MCF 10A (cell line): ENCODE measurements at regions of chr17 and their contacts with region 1.

Region 1: GRCh38 chr17:60641810-60642220 is 35.8 kb upstream of the BCAS3 start:
- DNase-seq: peak; percentile 86
- H3K4me3 Mint-ChIP-seq: no peak overlapping the region
- H3K27ac Mint-ChIP-seq: no peak overlapping the region
- H3K4me1 Mint-ChIP-seq: peaks cover 7% of the 10 kb centered on the region
- H3K27me3 Mint-ChIP-seq: no peaks in the 10 kb centered on the region
- CTCF ChIP-seq: peak; percentile 30

Region 2: GRCh38 chr17:60435244-60436167 is 206.3 kb before region 1 on chr17:
- CTCF ChIA-PET with region 1: interaction called, 4 read pairs
- POLR2A ChIA-PET with region 1: no interaction called
- intact Hi-C with region 1: loop called (anchors 1 kb)
- DNase-seq: peak; percentile 93
- H3K4me3 Mint-ChIP-seq: no peak overlapping the region
- H3K27ac Mint-ChIP-seq: no peak overlapping the region
- H3K4me1 Mint-ChIP-seq: peaks cover 8% of the 10 kb centered on the region
- H3K27me3 Mint-ChIP-seq: no peaks in the 10 kb centered on the region
- CTCF ChIP-seq: peak; percentile 87

Region 3: GRCh38 chr17:60468371-60468770 is 173.4 kb before region 1 on chr17:
- CTCF ChIA-PET with region 1: interaction called, 17 read pairs
- POLR2A ChIA-PET with region 1: no interaction called
- intact Hi-C with region 1: loop called (anchors 5 kb)
- DNase-seq: no peak
- H3K4me3 Mint-ChIP-seq: no peak overlapping the region
- H3K27ac Mint-ChIP-seq: no peak overlapping the region
- H3K4me1 Mint-ChIP-seq: peaks cover 11% of the 10 kb centered on the region
- H3K27me3 Mint-ChIP-seq: no peaks in the 10 kb centered on the region
- CTCF ChIP-seq: no peak

Region 4: DNA sequence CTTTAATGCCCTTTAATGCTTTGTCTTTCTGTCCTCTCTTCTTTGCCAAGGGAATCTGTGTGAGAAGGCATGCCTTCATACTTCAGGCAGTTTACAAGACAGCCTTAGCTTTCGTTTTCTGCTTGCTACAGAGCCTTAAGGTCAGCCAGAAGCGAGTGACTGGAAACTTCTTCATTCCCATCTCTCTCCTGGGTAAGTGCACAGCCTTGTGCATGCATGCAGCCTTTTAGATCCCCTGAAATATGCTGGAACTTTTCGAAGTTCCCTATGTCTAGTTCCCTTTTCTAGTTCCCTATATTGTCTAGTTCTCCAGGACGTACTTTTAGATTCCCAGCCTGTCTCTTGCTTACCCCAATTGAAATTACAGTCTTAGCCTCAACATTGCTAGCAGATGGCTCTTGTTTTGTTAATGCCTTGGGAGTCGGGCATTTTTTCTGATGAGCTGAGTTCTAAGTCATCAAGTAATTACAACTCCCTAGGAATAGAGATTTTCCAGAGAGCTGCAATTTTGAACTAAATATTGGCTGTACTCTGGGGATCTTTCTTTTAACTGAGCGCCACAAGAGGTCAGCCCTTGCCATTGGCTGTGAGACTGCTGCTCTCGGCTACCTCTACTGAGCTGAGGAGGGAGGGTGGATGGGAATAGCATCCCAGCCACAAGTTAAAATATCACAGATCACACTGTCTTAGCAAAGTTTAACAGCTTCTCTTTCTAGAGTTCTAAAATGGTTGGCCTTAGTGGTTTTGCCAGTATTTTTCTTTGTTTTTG is 64.5 kb before region 1 on chr17:
- CTCF ChIA-PET with region 1: interaction called, 34 read pairs
- POLR2A ChIA-PET with region 1: interaction called, 3 read pairs
- intact Hi-C with region 1: loop called (anchors 10 kb)
- DNase-seq: peak; percentile 11
- H3K4me3 Mint-ChIP-seq: peak overlapping the region; percentile 48
- H3K27ac Mint-ChIP-seq: peak overlapping the region; percentile 25
- H3K4me1 Mint-ChIP-seq: peaks cover 6% of the 10 kb centered on the region
- H3K27me3 Mint-ChIP-seq: no peaks in the 10 kb centered on the region
- CTCF ChIP-seq: no peak

Region 5: GRCh38 chr17:60599620-60600489 is 42.0 kb before region 1 on chr17 and contains the start of gene PPM1D:
- CTCF ChIA-PET with region 1: interaction called, 31 read pairs
- POLR2A ChIA-PET with region 1: interaction called, 8 read pairs
- intact Hi-C with region 1: loop called (anchors 1 kb)
- DNase-seq: peak; percentile 99
- H3K4me3 Mint-ChIP-seq: peak within 1 kb of the TSS; percentile 86
- H3K27ac Mint-ChIP-seq: peak within 1 kb of the TSS; percentile 89
- H3K4me1 Mint-ChIP-seq: peaks cover 6% of the 10 kb centered on the region
- H3K27me3 Mint-ChIP-seq: no peaks in the 10 kb centered on the region
- CTCF ChIP-seq: no peak
- total RNA-seq, gene PPM1D: 14.3 and 16.1 TPM in 2 replicates

Region 6: DNA sequence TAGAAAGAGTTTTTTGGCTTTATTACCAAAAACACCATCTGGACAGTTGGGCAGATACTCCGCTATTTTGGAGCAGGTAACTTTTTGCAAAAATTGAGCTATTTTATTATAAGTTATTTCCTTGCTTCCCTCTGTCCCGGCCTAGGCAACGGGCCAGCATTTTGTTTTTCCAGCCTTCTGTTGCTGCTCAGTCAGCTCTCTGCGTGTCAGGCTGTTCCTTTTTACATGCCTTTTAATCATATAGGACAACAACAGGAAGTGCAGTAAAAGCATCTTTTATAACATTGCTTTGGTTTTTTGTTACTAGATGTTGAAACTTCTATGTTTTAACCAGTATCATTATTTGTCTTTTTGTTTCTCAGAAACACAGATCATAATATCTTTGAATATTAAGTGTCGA is 11.5 kb before region 1 on chr17:
- CTCF ChIA-PET with region 1: interaction called, 21 read pairs
- POLR2A ChIA-PET with region 1: no interaction called
- intact Hi-C with region 1: no loop called
- DNase-seq: no peak
- H3K4me3 Mint-ChIP-seq: no peak overlapping the region
- H3K27ac Mint-ChIP-seq: no peak overlapping the region
- H3K4me1 Mint-ChIP-seq: no peaks in the 10 kb centered on the region
- H3K27me3 Mint-ChIP-seq: no peaks in the 10 kb centered on the region
- CTCF ChIP-seq: no peak